GM10248 (cell line): ENCODE measurements at regions of chr2 and their contacts with region 1.

Region 1: GRCh38 chr2:147082850-147083522 is 761.8 kb upstream of the ACVR2A start:
- DNase-seq: peak; percentile 37
- CTCF ChIP-seq: peak; percentile 89

Region 2: DNA sequence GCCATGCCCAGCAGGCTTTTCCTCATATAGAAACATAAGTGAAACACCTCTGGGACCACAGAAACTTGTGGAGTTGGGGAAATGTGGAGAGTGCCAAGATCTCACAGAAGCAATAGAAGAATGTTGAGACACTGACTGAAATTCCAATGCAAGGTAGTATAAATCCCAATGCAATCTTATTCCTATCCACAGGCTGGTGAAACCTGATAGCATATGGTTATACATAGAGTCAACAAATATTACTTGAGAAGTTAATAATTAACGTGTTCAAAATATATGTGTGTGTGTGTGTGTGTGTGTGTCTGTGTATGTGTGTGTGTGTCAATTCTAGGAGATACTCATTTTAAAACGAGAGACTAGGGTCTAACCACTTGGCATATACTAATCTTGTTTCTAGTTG is 14.9 kb before region 1 on chr2:
- CTCF ChIA-PET with region 1: interaction called, 27 read pairs
- POLR2A ChIA-PET with region 1: no interaction called
- DNase-seq: no peak
- CTCF ChIP-seq: no peak

Region 3: DNA sequence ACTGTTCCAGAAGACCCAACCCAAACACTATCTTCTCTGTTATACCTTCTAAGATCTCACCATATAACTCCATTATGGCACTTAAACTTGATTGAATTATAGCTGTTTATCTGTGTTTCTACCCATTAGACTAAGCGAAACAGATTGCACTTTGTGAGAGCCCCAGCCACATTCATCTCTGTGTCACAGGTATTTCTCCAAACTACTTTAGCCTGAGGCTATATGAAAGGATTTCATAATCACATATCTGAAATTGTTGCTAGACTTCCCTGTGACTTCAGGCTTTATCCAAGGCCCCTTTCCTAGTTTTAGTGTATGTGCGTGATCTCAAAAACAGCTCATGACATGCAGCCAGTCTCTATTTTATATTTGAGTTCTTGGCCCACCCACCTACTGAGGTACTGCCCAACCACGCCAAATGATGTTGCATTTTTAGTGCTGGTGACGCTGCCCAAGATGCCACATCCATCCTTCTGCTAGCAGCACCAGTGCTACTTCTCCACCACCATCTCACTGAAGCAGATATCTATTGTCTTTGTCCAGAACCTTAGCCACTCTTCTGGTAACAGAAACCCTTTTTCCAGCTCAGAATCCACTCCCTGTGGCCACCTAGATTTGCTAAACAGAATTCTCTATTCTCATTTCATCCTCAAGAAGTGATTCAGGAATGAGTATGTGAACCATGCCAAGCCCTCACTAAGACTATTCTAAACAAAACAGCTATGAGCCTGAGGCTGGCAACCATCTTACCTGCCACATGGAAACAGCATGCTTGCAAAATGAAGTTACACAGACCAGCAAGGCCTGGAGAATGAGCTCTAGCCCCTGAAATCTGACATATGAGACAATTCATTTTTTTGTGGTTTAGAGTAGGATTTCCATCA is 17.1 kb after region 1 on chr2:
- CTCF ChIA-PET with region 1: interaction called, 13 read pairs
- POLR2A ChIA-PET with region 1: no interaction called
- DNase-seq: no peak
- CTCF ChIP-seq: no peak

Region 4: GRCh38 chr2:147149589-147150245 is 66.7 kb after region 1 on chr2:
- CTCF ChIA-PET with region 1: no interaction called
- POLR2A ChIA-PET with region 1: no interaction called
- DNase-seq: no peak
- CTCF ChIP-seq: no peak

Region 5: GRCh38 chr2:147214914-147215313 is 131.9 kb after region 1 on chr2:
- CTCF ChIA-PET with region 1: no interaction called
- POLR2A ChIA-PET with region 1: no interaction called
- DNase-seq: no peak
- CTCF ChIP-seq: no peak

Region 6: GRCh38 chr2:147910990-147911473 is 828.0 kb after region 1 on chr2:
- CTCF ChIA-PET with region 1: interaction called, 44 read pairs
- POLR2A ChIA-PET with region 1: no interaction called
- DNase-seq: no peak
- CTCF ChIP-seq: peak; percentile 50